Transverse colon (tissue), 4 donors: ENCODE measurements at regions of chr17 and their contacts with region 1.

Region 1: DNA sequence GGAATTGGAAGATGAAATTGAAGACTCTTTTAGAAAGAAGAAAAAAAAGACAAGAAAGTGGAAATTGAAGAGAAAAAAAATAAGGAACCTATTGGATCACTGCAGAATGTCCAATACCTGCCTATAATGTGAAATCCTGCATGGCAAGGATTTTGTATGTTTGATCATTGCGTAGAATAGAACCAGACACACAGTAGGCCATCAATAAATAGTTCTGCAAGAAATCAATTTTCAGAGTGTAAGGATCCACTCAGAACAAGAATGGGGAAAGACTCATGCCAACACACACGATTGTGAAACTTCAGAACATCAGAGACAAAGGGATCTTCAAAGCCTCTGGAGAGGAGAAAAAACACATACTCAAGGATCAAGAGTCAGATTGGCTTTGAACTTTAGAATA is 39.7 kb upstream of the DHX40 start:
- DNase-seq: no peak
- H3K4me3 ChIP-seq: no peak overlapping the region
- H3K27ac ChIP-seq: no peak overlapping the region
- H3K4me1 ChIP-seq: peaks cover 2 to 11% (median 4%) of the 10 kb centered on the region in 4 donors
- H3K27me3 ChIP-seq: no peaks in the 10 kb centered on the region
- CTCF ChIP-seq: no peak
- EP300 ChIP-seq: no peak
- POLR2A ChIP-seq: no peak

Region 2: GRCh38 chr17:59234631-59235030 is 291.0 kb before region 1 on chr17:
- in situ Hi-C with region 1: no loop called
- intact Hi-C with region 1: no loop called
- DNase-seq: no peak
- H3K4me3 ChIP-seq: no peak overlapping the region
- H3K27ac ChIP-seq: no peak overlapping the region
- H3K4me1 ChIP-seq: no peaks in the 10 kb centered on the region
- H3K27me3 ChIP-seq: no peaks in the 10 kb centered on the region
- CTCF ChIP-seq: no peak
- EP300 ChIP-seq: no peak
- POLR2A ChIP-seq: no peak

Region 3: GRCh38 chr17:59329638-59330313 is 195.9 kb before region 1 on chr17:
- in situ Hi-C with region 1: no loop called
- intact Hi-C with region 1: no loop called
- DNase-seq: peak; percentile 66
- H3K4me3 ChIP-seq: peak overlapping the region in 1 of 4 donors; percentile 89
- H3K27ac ChIP-seq: peak overlapping the region; percentile 92 to 98 (median 96)
- H3K4me1 ChIP-seq: peaks cover 25 to 54% (median 43%) of the 10 kb centered on the region in 4 donors
- H3K27me3 ChIP-seq: no peaks in the 10 kb centered on the region
- CTCF ChIP-seq: peak; percentile 72 to 86 (median 76)
- EP300 ChIP-seq: no peak
- POLR2A ChIP-seq: no peak

Region 4: GRCh38 chr17:59483860-59484259 is 41.8 kb before region 1 on chr17:
- in situ Hi-C with region 1: no loop called
- intact Hi-C with region 1: loop called (anchors 1 kb)
- DNase-seq: no peak
- H3K4me3 ChIP-seq: no peak overlapping the region
- H3K27ac ChIP-seq: no peak overlapping the region
- H3K4me1 ChIP-seq: no peaks in the 10 kb centered on the region
- H3K27me3 ChIP-seq: no peaks in the 10 kb centered on the region
- CTCF ChIP-seq: no peak
- EP300 ChIP-seq: no peak
- POLR2A ChIP-seq: no peak